ENCODE measurements at regions of chr14 and their contacts with region 1.

Region 1: GRCh38 chr14:74860906-74861733 is 14.8 kb downstream of the PROX2 start:
- DNase-seq: peak; percentile 92 to 98
- ATAC-seq: peak; percentile 85
- H3K4me3 ChIP-seq: no peak overlapping the region
- H3K27ac ChIP-seq: no peak overlapping the region
- H3K4me1 ChIP-seq: no peaks in the 10 kb centered on the region
- H3K27me3 ChIP-seq: no peaks in the 10 kb centered on the region

Region 2: DNA sequence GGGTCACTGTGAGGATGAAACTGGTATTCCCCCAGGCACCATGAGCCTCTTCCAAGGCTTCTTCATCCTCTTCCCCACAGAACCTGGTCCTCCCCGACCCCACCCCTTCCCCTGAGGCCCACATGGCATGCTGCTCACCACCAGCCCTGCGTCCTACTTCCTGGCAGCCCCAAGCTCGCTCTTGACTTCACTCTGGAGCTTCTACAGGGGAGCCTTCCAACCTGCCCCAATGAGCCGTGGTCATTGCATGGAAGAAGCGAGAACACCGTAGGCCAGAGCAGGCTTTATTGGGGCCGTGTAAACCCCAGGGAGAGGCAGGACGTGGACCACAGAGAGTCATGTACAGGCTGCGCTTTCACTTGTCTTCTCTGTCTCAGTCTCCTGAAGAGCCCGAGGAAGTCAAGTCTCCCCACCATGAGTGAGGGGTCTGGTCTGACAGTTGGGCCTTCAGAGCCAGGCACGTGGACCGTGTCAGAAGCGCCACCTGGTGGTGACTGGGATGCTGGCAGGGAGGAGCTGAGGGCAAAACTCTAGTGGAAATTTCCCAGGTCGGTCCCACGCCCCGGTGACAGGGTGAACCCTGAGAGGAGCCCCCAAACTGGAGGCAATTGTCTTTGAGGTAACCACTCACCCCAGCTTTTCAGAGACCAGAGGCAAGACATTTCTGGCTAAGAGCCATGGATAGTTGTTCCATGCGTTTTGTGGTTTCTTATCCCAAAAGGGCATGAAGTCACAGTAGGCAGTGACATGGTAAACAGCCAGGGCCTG is 44.4 kb after region 1 on chr14:
- intact Hi-C with region 1: loop called (anchors 2 kb)
- DNase-seq: peak; percentile 79 to 94
- ATAC-seq: peak; percentile 51
- H3K4me3 ChIP-seq: no peak overlapping the region
- H3K27ac ChIP-seq: no peak overlapping the region
- H3K4me1 ChIP-seq: no peaks in the 10 kb centered on the region
- H3K27me3 ChIP-seq: no peaks in the 10 kb centered on the region

Region 3: DNA sequence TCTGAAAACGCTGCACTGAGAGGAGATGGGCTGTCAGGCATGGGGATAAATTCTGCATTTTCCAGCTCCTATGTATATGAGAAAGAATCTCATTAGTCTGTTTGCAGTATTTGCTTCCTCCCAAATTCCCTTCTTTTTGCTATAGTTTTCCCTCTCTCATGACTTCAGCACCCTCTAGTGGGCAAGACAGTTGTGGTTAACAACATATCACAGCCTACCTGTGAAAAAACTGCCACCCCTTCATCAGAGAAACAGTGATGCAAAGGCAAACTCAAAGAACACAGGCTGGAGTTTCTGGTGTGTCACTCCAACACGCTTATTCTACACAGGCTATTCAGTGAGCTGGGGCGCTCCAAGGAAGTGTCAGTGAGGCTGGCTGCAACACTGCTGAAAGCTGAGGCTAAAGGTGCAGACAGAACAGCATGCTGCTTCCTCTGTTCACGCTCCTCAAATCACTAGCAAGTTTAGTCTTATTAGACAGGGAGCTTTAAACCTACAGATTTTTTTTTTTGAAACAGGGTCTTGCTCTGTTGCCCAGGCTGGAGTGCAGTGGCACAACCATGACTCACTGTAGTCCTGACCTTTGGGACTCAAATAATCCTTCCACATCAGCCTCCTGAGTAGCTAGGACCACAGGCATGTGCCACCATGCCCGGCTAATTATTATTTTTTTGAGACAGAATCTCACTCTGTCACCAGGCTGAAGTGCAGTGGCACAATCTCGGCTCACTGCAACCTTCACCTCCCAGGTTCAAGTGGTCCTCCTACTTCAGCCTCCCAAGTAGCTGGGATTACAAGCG is 227.7 kb after region 1 on chr14:
- intact Hi-C with region 1: loop called in 1 of 2 experiments (anchors 2 kb)
- DNase-seq: no peak
- ATAC-seq: no peak
- H3K4me3 ChIP-seq: no peak overlapping the region
- H3K27ac ChIP-seq: no peak overlapping the region
- H3K4me1 ChIP-seq: no peaks in the 10 kb centered on the region
- H3K27me3 ChIP-seq: no peaks in the 10 kb centered on the region

Measured in aorta (tissue), 5 donors.